ENCODE measurements at regions of chr6 and their contacts with region 1.

Region 1: GRCh38 chr6:112087136-112087911 is at the starts of genes FAM229B and TUBE1:
- DNase-seq: peak; percentile 97
- H3K4me3 ChIP-seq: peak within 1 kb of the TSS; percentile 78
- H3K27ac ChIP-seq: peak within 1 kb of the TSS; percentile 49
- H3K4me1 ChIP-seq: peaks cover 6% of the 10 kb centered on the region
- CTCF ChIP-seq: no peak
- total RNA-seq, gene FAM229B: 3.7 and 14.9 TPM in 2 replicates
- total RNA-seq, gene TUBE1: 27.9 and 35.6 TPM in 2 replicates

Region 2: GRCh38 chr6:112163295-112164257 is 76.3 kb after region 1 on chr6:
- CTCF ChIA-PET with region 1: no interaction called
- POLR2A ChIA-PET with region 1: interaction called, 3 read pairs
- intact Hi-C with region 1: loop called (anchors 1 kb)
- DNase-seq: peak; percentile 59
- H3K4me3 ChIP-seq: no peak overlapping the region
- H3K27ac ChIP-seq: no peak overlapping the region
- H3K4me1 ChIP-seq: no peaks in the 10 kb centered on the region
- CTCF ChIP-seq: peak; percentile 93

Region 3: DNA sequence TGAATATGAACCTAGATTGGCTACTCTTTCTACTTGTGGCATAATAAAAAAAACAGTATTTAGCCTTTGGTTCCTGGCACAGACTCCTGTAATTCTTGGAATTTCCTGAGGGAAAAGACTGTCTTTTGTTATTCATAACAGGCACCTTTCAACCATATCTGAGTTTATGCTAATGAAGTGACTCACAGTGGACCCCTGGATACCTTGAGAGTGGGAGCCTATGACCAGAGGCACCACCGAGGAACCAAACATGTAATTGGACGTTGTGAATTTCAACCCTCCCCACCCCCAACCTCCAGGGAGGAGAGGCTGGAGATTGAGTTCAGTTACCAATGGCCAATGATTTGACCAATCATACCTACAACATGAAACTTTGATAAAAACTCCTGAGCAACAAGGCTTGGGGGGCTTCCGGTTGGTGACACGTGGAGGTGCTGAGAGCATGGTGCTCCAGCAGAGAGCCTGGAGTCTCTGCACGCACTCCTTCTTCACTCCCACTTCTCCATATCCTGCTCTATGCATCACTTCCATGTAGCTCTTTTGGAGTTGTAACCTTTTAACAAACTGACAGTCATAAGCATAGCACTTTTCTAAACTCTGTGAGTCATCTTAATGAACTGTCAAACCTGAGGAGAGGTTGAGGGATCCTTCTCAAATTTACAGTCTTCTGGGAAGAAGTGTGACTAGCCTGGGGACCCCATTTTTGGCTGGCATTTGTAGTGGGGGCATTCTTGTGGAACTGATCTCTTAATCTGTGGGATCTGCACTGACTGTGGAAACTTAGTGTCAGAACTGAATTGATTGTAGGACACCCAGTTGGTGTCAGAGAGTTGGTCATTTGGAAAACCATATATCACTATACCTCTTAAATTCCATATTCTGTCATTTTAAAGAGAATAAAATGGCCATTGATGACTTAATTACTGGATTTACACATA is 118.5 kb after region 1 on chr6:
- CTCF ChIA-PET with region 1: no interaction called
- POLR2A ChIA-PET with region 1: no interaction called
- intact Hi-C with region 1: no loop called
- DNase-seq: no peak
- H3K4me3 ChIP-seq: no peak overlapping the region
- H3K27ac ChIP-seq: no peak overlapping the region
- H3K4me1 ChIP-seq: no peaks in the 10 kb centered on the region
- CTCF ChIP-seq: no peak

Region 4: DNA sequence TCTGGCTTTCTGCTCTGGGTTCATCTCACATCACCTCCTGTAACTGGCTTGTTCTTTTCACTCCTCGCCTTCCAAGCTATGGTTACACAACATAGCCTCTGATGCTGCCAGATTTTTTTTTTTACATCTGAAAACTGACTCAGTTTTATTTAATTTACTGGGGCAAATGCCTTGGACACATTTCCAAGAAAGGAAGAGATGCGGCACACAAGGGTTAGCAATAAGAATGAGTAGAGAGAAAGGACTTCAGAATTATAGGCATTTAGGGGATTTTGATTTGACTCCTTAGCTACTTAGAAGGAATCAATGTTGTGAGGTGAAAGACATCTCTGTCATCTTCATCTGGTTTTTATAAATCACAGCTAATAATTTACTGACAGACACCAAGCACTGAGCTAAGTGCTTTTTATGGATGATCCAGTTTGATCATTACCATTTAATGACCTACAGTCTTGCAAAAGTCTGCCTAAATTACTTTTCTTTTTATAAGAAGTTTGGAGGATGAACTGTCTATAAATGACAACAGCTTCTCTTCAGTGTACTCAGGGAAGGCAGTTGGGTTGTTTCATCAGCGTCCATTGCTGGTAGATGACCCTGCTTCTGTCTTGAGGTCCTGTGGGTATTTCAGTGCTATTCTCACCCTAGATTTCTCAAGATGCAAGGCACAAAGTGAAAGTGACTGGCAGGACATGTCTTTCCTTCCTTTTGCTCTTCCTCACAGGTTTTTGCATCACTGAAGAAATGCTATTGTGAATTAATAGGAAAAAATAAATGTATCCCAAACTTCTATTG is 135.9 kb after region 1 on chr6:
- CTCF ChIA-PET with region 1: no interaction called
- POLR2A ChIA-PET with region 1: no interaction called
- intact Hi-C with region 1: no loop called
- DNase-seq: no peak
- H3K4me3 ChIP-seq: no peak overlapping the region
- H3K27ac ChIP-seq: no peak overlapping the region
- H3K4me1 ChIP-seq: no peaks in the 10 kb centered on the region
- CTCF ChIP-seq: no peak

Measured in OCI-LY7 (cell line).